Activated naive CD4-positive, alpha-beta T cell treated with anti-CD3 and anti-CD28 coated beads for 36 hours (primary cell): ENCODE measurements at regions of chr1 and their contacts with region 1.

Region 1: DNA sequence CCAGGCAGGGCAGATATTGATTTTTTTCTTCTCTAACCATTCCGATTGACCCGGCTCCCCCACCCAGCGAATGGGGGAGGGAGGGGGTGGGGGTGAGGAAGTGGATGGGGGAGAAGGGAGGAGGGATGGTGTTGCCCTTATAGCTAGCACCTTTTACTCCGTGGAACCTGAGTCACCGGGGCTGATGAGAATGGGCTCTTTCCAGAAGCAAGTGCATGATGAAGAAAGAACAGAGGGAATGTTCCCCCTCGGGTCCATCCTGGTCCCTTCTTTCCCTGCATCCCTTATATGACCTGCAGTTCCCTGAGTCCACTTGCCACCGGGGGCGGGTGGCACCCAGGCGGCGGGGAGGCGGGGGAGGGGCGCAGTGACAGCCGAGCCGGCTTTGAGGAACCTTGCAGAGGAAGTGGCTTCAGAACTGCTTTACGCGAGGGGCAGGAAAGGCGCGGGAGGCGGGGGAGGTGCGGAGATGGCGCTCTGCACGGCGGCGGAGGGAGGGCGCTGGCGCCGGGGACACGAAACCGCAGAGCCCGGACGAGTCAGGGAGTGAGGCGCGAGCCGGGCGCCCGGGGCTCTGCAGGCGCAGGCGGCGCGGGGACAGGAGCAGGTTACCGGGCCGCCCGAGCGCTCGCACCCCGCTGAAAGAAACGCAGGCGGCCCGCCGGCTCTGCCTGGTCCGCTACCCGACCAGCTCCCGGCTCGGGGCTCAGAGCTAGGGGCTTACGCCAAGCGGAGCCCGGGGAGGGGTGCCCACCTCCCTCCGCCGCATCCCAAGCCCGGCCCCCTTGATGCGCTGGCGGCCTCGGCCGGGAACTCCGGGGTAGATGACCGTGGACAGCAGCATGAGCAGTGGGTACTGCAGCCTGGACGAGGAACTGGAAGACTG is 49.7 kb downstream of the RASSF5 start:
- DNase-seq: peak; percentile 92
- H3K4me3 Mint-ChIP-seq: peak overlapping the region; percentile 96
- H3K27ac Mint-ChIP-seq: peak overlapping the region; percentile 100
- H3K4me1 Mint-ChIP-seq: peaks cover 61% of the 10 kb centered on the region
- H3K27me3 Mint-ChIP-seq: no peaks in the 10 kb centered on the region

Region 2: GRCh38 chr1:206925106-206925736 is 368.2 kb after region 1 on chr1:
- CTCF ChIA-PET with region 1: no interaction called
- intact Hi-C with region 1: loop called (anchors 2 kb)
- DNase-seq: peak; percentile 78
- H3K4me3 Mint-ChIP-seq: no peak overlapping the region
- H3K27ac Mint-ChIP-seq: no peak overlapping the region
- H3K4me1 Mint-ChIP-seq: peaks cover 24% of the 10 kb centered on the region
- H3K27me3 Mint-ChIP-seq: no peaks in the 10 kb centered on the region